PC-9 (cell line): ENCODE measurements at regions of chr14 and their contacts with region 1.

Region 1: DNA sequence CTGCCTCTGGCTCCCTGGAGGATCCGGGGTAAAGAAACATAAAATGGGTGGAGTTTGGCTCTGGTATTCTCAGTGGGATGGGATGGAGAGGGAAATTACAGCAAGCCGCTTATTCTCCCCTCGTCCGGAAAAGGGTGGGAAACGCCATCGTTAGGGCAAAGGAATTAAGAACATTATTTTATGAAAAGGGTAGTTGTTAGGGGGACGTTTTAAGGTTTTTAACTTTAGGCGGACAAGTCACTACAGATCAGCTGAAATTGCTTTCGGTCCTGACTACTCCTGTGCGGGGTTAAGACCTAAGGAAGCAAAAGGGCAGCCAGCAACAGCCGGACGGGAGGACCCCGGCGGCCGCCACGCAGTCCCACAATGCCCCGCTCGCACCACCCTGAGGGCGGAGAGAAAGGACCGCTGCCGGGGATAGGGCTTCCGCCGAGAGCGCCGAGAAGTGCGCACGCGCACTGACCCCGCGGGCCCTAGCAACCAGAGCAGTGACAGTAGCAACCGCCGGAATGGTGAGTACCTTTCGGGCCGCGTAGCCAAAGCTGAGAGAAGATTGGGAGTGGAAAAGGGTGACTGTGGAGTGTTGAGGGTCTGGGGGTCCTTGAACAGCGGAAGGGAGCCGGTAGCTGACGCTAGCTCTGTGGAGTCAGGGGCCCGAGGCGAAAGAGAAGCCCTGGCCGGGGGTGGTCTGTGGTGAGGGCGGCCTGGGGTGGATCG is at the start of gene DNAL1:
- DNase-seq: peak; percentile 71 to 93
- H3K4me3 ChIP-seq: peak within 1 kb of the TSS; percentile 88
- H3K27ac ChIP-seq: peak within 1 kb of the TSS; percentile 52
- H3K4me1 ChIP-seq: peaks cover 19% of the 10 kb centered on the region
- H3K27me3 ChIP-seq: no peaks in the 10 kb centered on the region
- CTCF ChIP-seq: no peak
- total RNA-seq, gene DNAL1: 23.0 and 25.5 TPM in 2 replicates

Region 2: DNA sequence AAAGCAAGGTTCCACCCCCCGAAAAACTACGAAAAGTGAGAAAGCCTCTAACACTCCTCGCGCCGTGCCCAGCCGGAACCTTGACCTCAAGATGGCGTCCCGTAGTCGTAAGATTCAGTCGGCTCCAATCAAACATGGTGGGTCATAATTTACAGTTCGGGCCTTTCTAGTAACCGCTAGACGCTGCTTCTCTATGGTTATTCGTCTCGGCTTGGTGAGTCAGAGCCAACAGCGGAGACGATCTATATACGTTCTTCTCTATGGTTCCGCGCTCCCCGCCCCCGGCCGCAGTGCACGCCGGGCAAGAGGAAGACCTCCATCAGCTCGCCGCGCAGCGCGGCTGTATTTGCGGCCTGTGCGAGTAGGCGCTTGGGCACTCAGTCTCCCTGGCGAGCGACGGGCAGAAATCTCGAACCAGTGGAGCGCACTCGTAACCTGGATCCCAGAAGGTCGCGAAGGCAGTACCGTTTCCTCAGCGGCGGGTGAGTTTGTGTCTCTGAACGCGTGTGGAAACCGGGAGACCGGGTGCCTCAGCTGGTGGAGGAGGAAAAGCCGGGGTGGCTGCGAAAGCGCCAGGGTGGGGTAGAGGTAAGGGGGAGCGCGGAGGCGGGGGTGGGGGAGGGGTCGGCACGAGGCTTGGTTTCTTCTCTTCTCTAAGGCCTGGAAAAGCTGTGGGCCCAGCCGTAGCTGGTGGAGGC is 586.3 kb before region 1 on chr14 and contains the start of gene RBM25:
- CTCF ChIA-PET with region 1: no interaction called
- POLR2A ChIA-PET with region 1: no interaction called
- intact Hi-C with region 1: no loop called
- DNase-seq: peak; percentile 96
- H3K4me3 ChIP-seq: peak within 1 kb of the TSS; percentile 99
- H3K27ac ChIP-seq: peak within 1 kb of the TSS; percentile 91
- H3K4me1 ChIP-seq: peaks cover 21% of the 10 kb centered on the region
- H3K27me3 ChIP-seq: no peaks in the 10 kb centered on the region
- CTCF ChIP-seq: no peak
- total RNA-seq, gene RBM25: 59.2 and 68.9 TPM in 2 replicates

Region 3: DNA sequence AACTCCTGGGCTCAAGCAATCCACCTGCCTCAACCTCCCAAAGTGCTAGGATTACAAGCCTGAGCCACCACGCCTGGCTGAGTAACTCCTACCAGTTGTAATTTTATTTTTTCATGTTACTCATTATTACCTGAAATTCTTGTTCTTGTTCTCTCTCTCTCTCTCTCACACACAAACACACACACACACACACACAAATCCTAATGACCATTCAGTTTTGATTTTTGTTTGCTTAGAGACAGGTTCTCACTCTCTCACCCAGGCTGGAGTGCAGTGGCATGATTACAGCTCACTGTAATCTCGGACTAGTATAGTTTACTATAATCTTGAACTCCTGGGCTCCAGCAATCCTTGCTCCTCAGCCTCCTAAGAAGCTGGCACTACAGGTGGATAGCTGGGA is 30.3 kb after region 1 on chr14:
- CTCF ChIA-PET with region 1: no interaction called
- POLR2A ChIA-PET with region 1: no interaction called
- intact Hi-C with region 1: no loop called
- DNase-seq: no peak
- H3K4me3 ChIP-seq: no peak overlapping the region
- H3K27ac ChIP-seq: peak overlapping the region; percentile 45
- H3K4me1 ChIP-seq: no peaks in the 10 kb centered on the region; the same call in 1 of the 2 replicates
- H3K27me3 ChIP-seq: no peaks in the 10 kb centered on the region
- CTCF ChIP-seq: no peak

Region 4: GRCh38 chr14:73712071-73712506 is 67.4 kb after region 1 on chr14:
- CTCF ChIA-PET with region 1: no interaction called
- POLR2A ChIA-PET with region 1: no interaction called
- intact Hi-C with region 1: no loop called
- DNase-seq: no peak
- H3K4me3 ChIP-seq: peak overlapping the region; percentile 94; the same call in 1 of the 2 replicates
- H3K27ac ChIP-seq: no peak overlapping the region
- H3K4me1 ChIP-seq: peaks cover 31% of the 10 kb centered on the region
- H3K27me3 ChIP-seq: no peaks in the 10 kb centered on the region
- CTCF ChIP-seq: no peak

Region 5: DNA sequence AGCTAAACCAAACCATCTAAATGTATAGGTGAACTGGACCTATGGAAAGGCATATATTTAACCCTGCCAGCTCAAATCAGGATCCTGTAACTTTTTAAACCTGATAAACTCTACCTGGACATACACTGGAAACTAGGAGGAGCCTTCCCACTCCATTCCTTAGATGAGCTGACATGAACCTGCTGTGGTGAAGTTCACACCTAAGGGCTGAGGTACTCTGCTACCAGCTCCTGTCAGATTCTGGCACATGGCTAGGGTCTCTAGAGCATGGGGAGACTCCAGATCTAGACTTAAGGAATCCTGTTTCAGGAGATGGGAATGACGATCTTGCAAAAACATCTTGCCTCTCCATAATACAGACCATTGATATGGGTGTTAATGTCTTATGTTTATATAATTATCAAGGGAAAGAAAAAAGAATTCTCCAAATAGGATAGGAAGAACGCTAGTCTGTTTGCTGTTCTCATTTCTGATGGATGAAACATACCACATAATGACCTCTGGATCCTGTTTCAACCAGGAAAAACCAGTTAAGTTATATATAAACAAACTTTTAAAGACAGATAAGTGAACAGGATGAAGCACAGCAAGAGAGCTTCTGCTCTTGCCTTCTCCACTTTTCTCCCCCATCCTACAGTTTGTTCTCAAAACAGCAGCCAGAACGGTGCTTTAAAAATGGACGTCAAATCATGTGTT is 333.1 kb after region 1 on chr14:
- CTCF ChIA-PET with region 1: no interaction called
- POLR2A ChIA-PET with region 1: interaction called, 12 read pairs
- intact Hi-C with region 1: no loop called
- DNase-seq: peak in 1 of 2 experiments; percentile 73
- H3K4me3 ChIP-seq: no peak overlapping the region
- H3K27ac ChIP-seq: 0 out of 2 replicates have a peak overlapping the region, but pooled peaks have one; percentile 2
- H3K4me1 ChIP-seq: peaks cover 20% of the 10 kb centered on the region
- H3K27me3 ChIP-seq: no peaks in the 10 kb centered on the region
- CTCF ChIP-seq: no peak